Activated naive CD4-positive, alpha-beta T cell treated with anti-CD3 and anti-CD28 coated beads for 36 hours (primary cell): ENCODE measurements at regions of chr3 and their contacts with region 1.

Region 1: GRCh38 chr3:16048435-16049318 is 125.8 kb upstream of the GALNT15 start:
- DNase-seq: peak; percentile 68
- H3K4me3 Mint-ChIP-seq: no peak overlapping the region
- H3K27ac Mint-ChIP-seq: no peak overlapping the region
- H3K4me1 Mint-ChIP-seq: peaks cover 10% of the 10 kb centered on the region
- H3K27me3 Mint-ChIP-seq: no peaks in the 10 kb centered on the region

Region 2: GRCh38 chr3:16177962-16178627 is 129.4 kb after region 1 on chr3:
- CTCF ChIA-PET with region 1: interaction called, 74 read pairs
- intact Hi-C with region 1: loop called (anchors 1 kb)
- DNase-seq: peak; percentile 73
- H3K4me3 Mint-ChIP-seq: no peak overlapping the region
- H3K27ac Mint-ChIP-seq: no peak overlapping the region
- H3K4me1 Mint-ChIP-seq: peaks cover 2% of the 10 kb centered on the region
- H3K27me3 Mint-ChIP-seq: peaks cover 7% of the 10 kb centered on the region

Region 3: DNA sequence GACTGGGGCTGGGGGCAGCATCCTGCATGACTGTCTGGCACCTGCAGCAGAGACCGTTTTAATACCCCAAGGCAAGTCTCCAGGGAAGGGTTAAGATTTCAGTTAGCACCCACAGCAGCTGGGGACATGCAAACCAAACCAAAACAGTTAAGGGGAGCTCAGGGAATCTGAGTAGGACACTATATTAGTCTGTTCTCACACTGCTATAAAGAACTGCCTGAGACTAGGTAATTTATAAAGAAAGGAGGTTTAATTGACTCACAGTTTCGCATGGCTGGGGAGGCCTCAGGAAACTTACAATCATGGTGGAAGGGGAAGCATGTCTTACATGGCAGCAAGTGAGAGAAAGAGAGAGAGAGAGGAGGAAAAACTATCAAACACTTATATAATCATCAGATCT is 151.1 kb after region 1 on chr3:
- CTCF ChIA-PET with region 1: no interaction called
- intact Hi-C with region 1: no loop called
- DNase-seq: no peak
- H3K4me3 Mint-ChIP-seq: no peak overlapping the region
- H3K27ac Mint-ChIP-seq: no peak overlapping the region
- H3K4me1 Mint-ChIP-seq: no peaks in the 10 kb centered on the region
- H3K27me3 Mint-ChIP-seq: no peaks in the 10 kb centered on the region